ENCODE measurements at regions of chr6 and their contacts with region 1.

Region 1: GRCh38 chr6:135521431-135521830 is 23.9 kb upstream of the AHI1 start:
- DNase-seq: no peak
- CTCF ChIP-seq: no peak

Region 2: DNA sequence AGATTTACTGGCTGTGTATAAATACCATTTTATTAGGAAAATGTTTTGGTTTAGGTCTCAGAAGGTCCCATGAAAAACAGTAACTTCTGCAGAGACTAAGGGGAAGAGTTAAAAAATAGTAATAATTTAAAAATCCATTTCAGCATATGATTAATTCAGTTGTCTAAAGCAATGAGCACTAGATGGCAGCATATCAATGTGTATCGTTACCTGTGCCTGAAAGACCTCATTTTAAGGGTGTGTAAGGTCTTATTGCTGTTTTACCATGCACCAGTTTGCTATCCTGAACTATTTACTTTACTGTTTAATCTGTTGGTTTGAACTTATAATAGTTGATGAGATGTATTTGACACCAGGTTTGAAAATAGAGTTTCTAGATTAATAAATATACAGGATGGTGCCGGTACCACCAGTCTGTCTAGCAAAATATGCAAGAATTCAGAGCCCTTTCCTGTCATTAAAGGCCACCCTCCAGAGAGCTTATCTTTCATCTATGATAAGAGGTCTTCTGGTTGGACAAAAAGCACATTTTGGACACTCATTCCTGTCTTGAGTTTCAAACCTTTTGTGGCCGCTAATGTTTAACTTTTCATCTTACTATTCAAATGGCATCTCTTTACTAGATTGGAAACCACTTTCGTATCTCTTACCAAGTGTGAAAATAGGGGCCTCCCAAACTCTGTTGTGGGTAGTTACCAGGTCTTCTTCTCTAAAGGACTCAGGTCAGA is 15.0 kb before region 1 on chr6:
- CTCF ChIA-PET with region 1: interaction called, 10 read pairs
- POLR2A ChIA-PET with region 1: no interaction called
- DNase-seq: peak; percentile 19
- CTCF ChIP-seq: peak; percentile 54

Measured in GM10248 (cell line).